IMR-90 (cell line): ENCODE measurements at regions of chr6 and their contacts with region 1.

Region 1: GRCh38 chr6:155174576-155175211 is 89.1 kb upstream of the CLDN20 start:
- DNase-seq: peak; percentile 81
- ATAC-seq: peak; percentile 84
- H3K4me3 ChIP-seq: no peak overlapping the region
- H3K27ac ChIP-seq: no peak overlapping the region
- H3K4me1 ChIP-seq: peaks cover 10% of the 10 kb centered on the region
- H3K27me3 ChIP-seq: no peaks in the 10 kb centered on the region
- CTCF ChIP-seq: peak; percentile 81
- POLR2A ChIP-seq: no peak
- RAD21 ChIP-seq: peak; percentile 86

Region 2: DNA sequence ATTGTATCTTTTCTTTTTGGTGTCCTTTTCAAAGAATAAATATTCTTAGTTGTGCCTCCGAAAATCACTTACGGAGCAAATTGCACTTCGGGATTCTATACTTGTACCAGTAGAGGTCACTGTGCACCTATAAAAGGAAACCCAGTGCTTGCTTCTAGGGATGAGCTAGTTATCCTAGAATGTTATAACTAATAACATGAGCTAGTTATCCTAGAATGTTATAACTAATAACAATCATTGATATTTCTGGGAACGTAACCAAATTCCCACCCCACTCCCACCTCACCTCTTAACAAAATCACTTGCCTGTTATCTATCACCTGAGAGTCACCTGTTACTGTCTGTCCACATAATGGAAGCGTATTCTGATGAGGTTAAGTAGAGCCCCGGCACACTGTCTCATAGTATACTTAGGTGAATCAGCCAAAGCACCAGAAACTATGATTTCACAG is 306.5 kb before region 1 on chr6:
- CTCF ChIA-PET with region 1: interaction called, 10 read pairs
- POLR2A ChIA-PET with region 1: no interaction called
- dilution Hi-C with region 1: no loop called
- in situ Hi-C with region 1: loop called (anchors 10 kb)
- intact Hi-C with region 1: loop called (anchors 1 kb)
- DNase-seq: peak; percentile 76
- ATAC-seq: peak; percentile 83
- H3K4me3 ChIP-seq: no peak overlapping the region
- H3K27ac ChIP-seq: no peak overlapping the region
- H3K4me1 ChIP-seq: no peaks in the 10 kb centered on the region
- H3K27me3 ChIP-seq: no peaks in the 10 kb centered on the region
- CTCF ChIP-seq: peak; percentile 86
- POLR2A ChIP-seq: no peak
- RAD21 ChIP-seq: peak; percentile 84

Region 3: GRCh38 chr6:154928325-154928922 is 246.3 kb before region 1 on chr6:
- CTCF ChIA-PET with region 1: interaction called, 8 read pairs
- POLR2A ChIA-PET with region 1: no interaction called
- dilution Hi-C with region 1: no loop called
- in situ Hi-C with region 1: loop called (anchors 5 kb)
- intact Hi-C with region 1: loop called (anchors 1 kb)
- DNase-seq: peak; percentile 69
- ATAC-seq: peak; percentile 77
- H3K4me3 ChIP-seq: no peak overlapping the region
- H3K27ac ChIP-seq: no peak overlapping the region
- H3K4me1 ChIP-seq: peaks cover 16% of the 10 kb centered on the region
- H3K27me3 ChIP-seq: no peaks in the 10 kb centered on the region
- CTCF ChIP-seq: peak; percentile 88
- POLR2A ChIP-seq: 0 out of 2 replicates have a peak, but pooled peaks have one; percentile 34
- RAD21 ChIP-seq: peak; percentile 97

Region 4: DNA sequence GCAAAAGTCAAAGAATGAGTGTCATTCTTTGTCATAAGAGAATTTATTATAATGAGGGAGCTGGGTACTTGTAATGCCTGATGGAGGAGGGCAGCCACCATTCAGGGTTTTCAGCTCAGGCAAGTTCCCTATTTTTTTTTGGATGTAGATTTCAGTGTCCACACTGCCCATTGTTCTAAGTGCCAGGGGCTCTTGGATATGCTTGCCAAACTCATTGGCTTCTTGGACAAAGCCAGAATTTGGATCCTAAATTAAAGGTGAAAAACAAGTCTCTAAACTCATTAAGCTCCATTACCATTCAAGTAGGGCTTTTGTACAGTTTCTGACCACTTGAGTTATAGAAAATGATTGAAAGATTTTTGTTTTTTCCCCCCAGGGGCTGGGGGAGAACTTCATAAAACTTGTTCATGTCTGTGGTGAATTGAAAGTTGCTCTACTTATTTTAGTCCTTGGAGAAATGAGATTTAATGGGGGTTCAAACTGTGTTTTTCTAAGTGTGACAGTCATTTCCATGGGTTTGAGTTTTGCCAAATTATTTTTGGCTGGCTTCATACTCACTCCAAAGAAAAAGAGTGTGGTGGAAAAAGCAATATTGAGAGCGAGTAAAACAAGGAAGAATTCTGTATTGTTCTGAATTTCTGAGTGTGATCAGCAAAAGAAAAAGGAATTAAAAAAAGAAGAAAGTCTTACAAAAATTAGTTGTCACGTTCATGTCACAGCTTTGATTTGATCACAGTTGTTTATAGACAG is 133.6 kb before region 1 on chr6:
- CTCF ChIA-PET with region 1: no interaction called
- POLR2A ChIA-PET with region 1: no interaction called
- dilution Hi-C with region 1: no loop called
- in situ Hi-C with region 1: no loop called
- intact Hi-C with region 1: no loop called
- DNase-seq: no peak
- ATAC-seq: no peak
- H3K4me3 ChIP-seq: no peak overlapping the region
- H3K27ac ChIP-seq: no peak overlapping the region
- H3K4me1 ChIP-seq: no peaks in the 10 kb centered on the region; the same call in 1 of the 2 replicates
- H3K27me3 ChIP-seq: no peaks in the 10 kb centered on the region
- CTCF ChIP-seq: no peak
- POLR2A ChIP-seq: no peak
- RAD21 ChIP-seq: no peak

Region 5: DNA sequence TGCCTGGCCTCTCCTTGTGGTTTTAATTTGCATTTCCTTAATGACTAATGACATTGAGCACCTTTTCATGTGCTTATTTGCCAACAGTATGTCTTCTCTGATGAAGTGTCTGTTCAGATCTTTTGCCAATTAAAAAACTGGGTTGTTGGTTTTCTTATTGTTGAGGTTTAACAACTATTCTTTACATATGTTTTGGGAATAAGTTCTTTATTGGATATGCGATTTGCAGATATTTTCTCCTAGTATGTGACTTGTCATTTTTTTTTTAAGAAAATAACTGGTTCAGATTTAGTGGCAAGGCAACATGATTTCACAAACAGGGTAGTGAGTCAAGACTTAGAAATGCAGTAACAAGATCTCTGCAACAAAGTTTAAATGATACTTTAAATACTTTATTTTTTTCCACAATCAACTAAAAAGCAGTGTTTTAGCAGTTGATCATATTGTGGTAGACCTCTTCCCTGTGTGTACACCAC is 111.8 kb before region 1 on chr6:
- CTCF ChIA-PET with region 1: interaction called, 3 read pairs
- POLR2A ChIA-PET with region 1: no interaction called
- dilution Hi-C with region 1: no loop called
- in situ Hi-C with region 1: no loop called
- intact Hi-C with region 1: loop called (anchors 5 kb)
- DNase-seq: peak; percentile 91
- ATAC-seq: peak; percentile 81
- H3K4me3 ChIP-seq: no peak overlapping the region
- H3K27ac ChIP-seq: peak overlapping the region; percentile 71
- H3K4me1 ChIP-seq: peaks cover 13% of the 10 kb centered on the region
- H3K27me3 ChIP-seq: no peaks in the 10 kb centered on the region
- CTCF ChIP-seq: no peak
- POLR2A ChIP-seq: no peak
- RAD21 ChIP-seq: no peak

Region 6: GRCh38 chr6:155314092-155314772 is 139.5 kb after region 1 on chr6 and contains the start of gene TFB1M:
- CTCF ChIA-PET with region 1: no interaction called
- POLR2A ChIA-PET with region 1: interaction called, 9 read pairs
- dilution Hi-C with region 1: no loop called
- in situ Hi-C with region 1: no loop called
- intact Hi-C with region 1: loop called (anchors 1 kb)
- DNase-seq: peak; percentile 98
- ATAC-seq: peak; percentile 97
- H3K4me3 ChIP-seq: peak within 1 kb of the TSS; percentile 84
- H3K27ac ChIP-seq: peak within 1 kb of the TSS; percentile 78
- H3K4me1 ChIP-seq: peaks cover 6% of the 10 kb centered on the region
- H3K27me3 ChIP-seq: no peaks in the 10 kb centered on the region
- CTCF ChIP-seq: no peak
- POLR2A ChIP-seq: peak; percentile 83
- RAD21 ChIP-seq: no peak
- total RNA-seq, gene TFB1M: 22.4 and 28.1 TPM in 2 replicates